ENCODE measurements at regions of chr19 and their contacts with region 1.

Region 1: DNA sequence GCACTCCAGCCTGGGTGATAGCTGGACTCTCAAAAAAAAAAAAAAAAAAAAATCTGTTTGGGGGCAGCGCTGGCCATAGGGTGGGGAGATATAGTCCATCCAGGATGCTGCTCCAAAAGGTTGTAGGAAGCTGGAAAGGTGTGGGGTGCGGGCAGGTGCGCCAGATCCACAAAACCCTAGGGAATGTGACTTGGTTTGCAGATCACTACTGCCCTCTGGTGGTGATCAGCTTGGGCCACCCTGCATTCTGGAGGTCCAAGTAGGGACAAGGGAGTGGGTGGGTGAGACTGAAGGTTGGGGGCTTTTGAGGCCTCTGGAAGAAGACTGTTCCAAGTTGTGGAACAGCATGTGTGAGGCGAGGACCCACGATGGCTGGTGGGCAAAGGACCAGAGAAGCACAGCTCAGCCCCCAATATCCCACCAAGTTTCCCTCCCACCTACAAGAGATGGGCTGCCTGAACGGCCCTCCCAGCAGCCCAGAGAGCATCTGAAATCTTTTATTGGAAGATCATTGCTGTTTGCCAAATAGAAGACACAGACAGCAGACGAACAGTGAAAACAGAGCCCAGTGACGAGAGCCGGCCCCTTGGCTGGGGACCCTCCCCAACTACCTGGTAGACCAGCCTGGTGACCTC is 10.4 kb upstream of the TYK2 start:
- DNase-seq: peak; percentile 57 to 74 (median 73)
- ATAC-seq: peak; percentile 77 to 84 (median 78)
- H3K4me3 ChIP-seq: no peak overlapping the region
- H3K27ac ChIP-seq: no peak overlapping the region
- H3K4me1 ChIP-seq: no peaks in the 10 kb centered on the region
- H3K27me3 ChIP-seq: no peaks in the 10 kb centered on the region
- CTCF ChIP-seq: peak; percentile 76 to 81 (median 80)
- POLR2A ChIP-seq: no peak

Region 2: GRCh38 chr19:10259162-10259905 is 131.4 kb before region 1 on chr19:
- intact Hi-C with region 1: loop called (anchors 5 kb)
- DNase-seq: peak; percentile 76 to 83 (median 81)
- ATAC-seq: peak; percentile 58 to 74 (median 67)
- H3K4me3 ChIP-seq: no peak overlapping the region
- H3K27ac ChIP-seq: no peak overlapping the region
- H3K4me1 ChIP-seq: peaks cover 0 to 13% (median 2%) of the 10 kb centered on the region in 4 donors
- H3K27me3 ChIP-seq: no peaks in the 10 kb centered on the region
- CTCF ChIP-seq: peak; percentile 48 to 70 (median 68)
- POLR2A ChIP-seq: no peak

Region 3: GRCh38 chr19:10269333-10270179 is 121.2 kb before region 1 on chr19:
- intact Hi-C with region 1: loop called in 1 of 2 experiments (anchors 5 kb)
- DNase-seq: peak; percentile 88 to 91 (median 90)
- ATAC-seq: peak; percentile 66 to 78 (median 74)
- H3K4me3 ChIP-seq: peak overlapping the region; percentile 69 to 74 (median 71)
- H3K27ac ChIP-seq: peak overlapping the region; percentile 87 to 90 (median 89)
- H3K4me1 ChIP-seq: peaks cover 0 to 14% (median 3%) of the 10 kb centered on the region in 4 donors
- H3K27me3 ChIP-seq: no peaks in the 10 kb centered on the region
- CTCF ChIP-seq: peak; percentile 91 to 94 (median 94)
- POLR2A ChIP-seq: no peak

Region 4: GRCh38 chr19:10478903-10479384 is 88.2 kb after region 1 on chr19:
- intact Hi-C with region 1: no loop called
- DNase-seq: peak; percentile 79 to 81 (median 79)
- ATAC-seq: peak; percentile 85 to 95 (median 92)
- H3K4me3 ChIP-seq: peak overlapping the region; percentile 14 to 32 (median 19)
- H3K27ac ChIP-seq: no peak overlapping the region
- H3K4me1 ChIP-seq: peaks cover 0 to 7% (median 0%) of the 10 kb centered on the region in 4 donors
- H3K27me3 ChIP-seq: no peaks in the 10 kb centered on the region
- CTCF ChIP-seq: peak in 3 of 4 donors; percentile 61 to 63 (median 62)
- POLR2A ChIP-seq: no peak

Measured in right lobe of liver (tissue), 6 donors.